ENCODE measurements at regions of chr10 and their contacts with region 1.

Region 1: DNA sequence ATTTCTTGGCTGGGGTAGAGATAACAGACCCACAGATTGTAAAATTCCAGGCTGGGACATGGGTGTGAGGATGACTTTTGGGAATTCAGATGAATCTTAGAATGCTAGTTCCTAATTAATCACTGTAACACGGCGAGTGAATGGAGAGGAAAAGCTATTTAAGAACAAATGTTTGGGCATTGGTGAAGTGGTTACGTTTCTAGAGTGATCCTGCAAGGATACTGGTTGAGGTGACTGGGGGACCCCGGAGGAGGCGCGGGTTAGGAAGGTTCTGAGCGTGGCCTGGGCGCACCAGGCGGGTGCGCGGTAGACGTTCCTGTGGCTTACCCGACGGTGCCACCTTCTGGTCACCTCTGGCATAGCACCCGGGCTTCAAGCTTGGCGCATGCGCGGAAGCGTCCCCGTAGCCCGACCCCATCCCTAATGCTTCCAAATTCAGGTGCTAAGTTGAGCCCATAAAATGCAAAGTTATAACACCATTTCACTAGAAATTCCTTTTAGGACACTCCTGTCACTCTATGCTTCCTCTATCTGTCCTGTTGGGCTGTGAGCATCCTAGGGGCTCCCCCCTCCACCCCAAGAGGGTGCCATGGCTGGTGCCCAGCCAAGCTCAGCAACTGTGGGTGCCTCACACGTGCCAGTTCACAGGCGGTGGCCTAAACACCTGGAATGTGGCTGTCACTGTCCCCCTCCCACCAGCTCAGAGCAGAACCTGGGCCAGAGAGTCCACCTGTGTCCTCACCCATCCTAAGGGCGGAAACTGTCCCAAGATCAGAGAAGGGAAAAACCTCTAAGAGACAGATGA is 104.5 kb downstream of the PTPRE start:
- DNase-seq: peak; percentile 86
- H3K4me3 ChIP-seq: no peak overlapping the region
- H3K27ac ChIP-seq: no peak overlapping the region
- H3K4me1 ChIP-seq: no peaks in the 10 kb centered on the region
- H3K27me3 ChIP-seq: no peaks in the 10 kb centered on the region
- CTCF ChIP-seq: peak; percentile 99

Region 2: GRCh38 chr10:127872871-127873600 is 138.3 kb before region 1 on chr10:
- intact Hi-C with region 1: loop called (anchors 2 kb)
- DNase-seq: peak; percentile 85
- H3K4me3 ChIP-seq: no peak overlapping the region
- H3K27ac ChIP-seq: no peak overlapping the region
- H3K4me1 ChIP-seq: no peaks in the 10 kb centered on the region
- H3K27me3 ChIP-seq: no peaks in the 10 kb centered on the region
- CTCF ChIP-seq: peak; percentile 59

Region 3: GRCh38 chr10:127906548-127907377 is 104.6 kb before region 1 on chr10 and contains the start of gene PTPRE:
- intact Hi-C with region 1: loop called (anchors 2 kb)
- DNase-seq: peak; percentile 79
- H3K4me3 ChIP-seq: peak within 1 kb of the TSS; percentile 75
- H3K27ac ChIP-seq: peak within 1 kb of the TSS; percentile 85
- H3K4me1 ChIP-seq: peaks cover 8% of the 10 kb centered on the region
- H3K27me3 ChIP-seq: no peaks in the 10 kb centered on the region
- CTCF ChIP-seq: peak; percentile 57
- total RNA-seq, gene PTPRE: 15.9 to 18.8 TPM

Region 4: GRCh38 chr10:127973791-127974311 is 37.5 kb before region 1 on chr10:
- intact Hi-C with region 1: no loop called
- DNase-seq: no peak
- H3K4me3 ChIP-seq: no peak overlapping the region
- H3K27ac ChIP-seq: no peak overlapping the region
- H3K4me1 ChIP-seq: no peaks in the 10 kb centered on the region
- H3K27me3 ChIP-seq: no peaks in the 10 kb centered on the region
- CTCF ChIP-seq: no peak